ENCODE measurements at regions of chr22 and their contacts with region 1.

Region 1: GRCh38 chr22:40636380-40637182 is at the start of gene MRTFA:
- DNase-seq: peak; percentile 100
- H3K4me3 Mint-ChIP-seq: peak within 1 kb of the TSS; percentile 91
- H3K27ac Mint-ChIP-seq: peak within 1 kb of the TSS; percentile 89
- H3K4me1 Mint-ChIP-seq: peaks cover 40% of the 10 kb centered on the region
- H3K27me3 Mint-ChIP-seq: no peaks in the 10 kb centered on the region
- total RNA-seq, gene MRTFA: 44.1 to 45.5 TPM

Region 2: DNA sequence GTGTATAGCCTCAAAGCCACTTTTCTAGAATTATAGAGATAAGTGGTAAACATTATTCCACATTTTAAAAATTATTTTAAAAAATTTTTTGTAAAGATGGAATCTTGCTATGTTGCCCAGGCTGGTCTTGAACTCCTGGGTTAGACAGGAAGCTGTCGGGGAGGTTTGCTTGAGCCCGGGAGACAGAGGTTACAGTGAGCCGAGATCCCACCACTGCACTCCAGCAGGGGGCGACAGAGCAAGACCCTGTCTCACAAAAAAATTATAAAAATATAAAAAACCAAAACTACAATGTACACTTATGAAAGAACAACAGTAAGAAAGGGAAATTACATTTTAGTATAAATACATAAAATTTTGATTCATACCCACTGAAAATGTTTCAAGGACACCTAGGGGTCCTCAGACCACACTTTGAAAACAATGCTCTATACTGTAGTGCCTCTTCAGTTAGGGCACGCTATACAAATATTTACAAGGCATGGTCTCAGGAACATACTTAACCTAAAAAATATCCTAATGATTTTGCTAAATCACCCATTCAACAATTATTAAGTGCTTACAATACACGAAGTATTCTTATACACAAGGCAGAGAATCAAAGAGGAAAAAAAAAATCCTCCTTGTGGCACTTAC is 111.2 kb before region 1 on chr22:
- CTCF ChIA-PET with region 1: interaction called, 218 read pairs
- POLR2A ChIA-PET with region 1: no interaction called
- intact Hi-C with region 1: loop called (anchors 2 kb)
- DNase-seq: peak; percentile 82
- H3K4me3 Mint-ChIP-seq: no peak overlapping the region
- H3K27ac Mint-ChIP-seq: no peak overlapping the region
- H3K4me1 Mint-ChIP-seq: peaks cover 37% of the 10 kb centered on the region
- H3K27me3 Mint-ChIP-seq: no peaks in the 10 kb centered on the region

Region 3: GRCh38 chr22:40578171-40578570 is 58.4 kb before region 1 on chr22:
- CTCF ChIA-PET with region 1: no interaction called
- POLR2A ChIA-PET with region 1: interaction called, 3 read pairs
- intact Hi-C with region 1: loop called (anchors 2 kb)
- DNase-seq: peak; percentile 65
- H3K4me3 Mint-ChIP-seq: peak overlapping the region; percentile 12
- H3K27ac Mint-ChIP-seq: peak overlapping the region; percentile 76
- H3K4me1 Mint-ChIP-seq: peaks cover 20% of the 10 kb centered on the region
- H3K27me3 Mint-ChIP-seq: no peaks in the 10 kb centered on the region

Measured in activated CD4-positive, alpha-beta memory T cell treated with anti-CD3 and anti-CD28 coated beads for 36 hours (primary cell).